Mammary epithelial cell (primary cell): ENCODE measurements at regions of chr6 and their contacts with region 1.

Region 1: GRCh38 chr6:10694302-10695085 is at the starts of genes C6orf52 and PAK1IP1:
- DNase-seq: peak; percentile 91
- H3K4me3 ChIP-seq: peak within 1 kb of the TSS; percentile 58 to 98 (median 96)
- H3K27ac ChIP-seq: peak within 1 kb of the TSS; percentile 98
- H3K4me1 ChIP-seq: peaks cover 19% of the 10 kb centered on the region
- H3K27me3 ChIP-seq: no peaks in the 10 kb centered on the region
- CTCF ChIP-seq: no peak
- total RNA-seq, gene C6orf52: 0.50 TPM in 1 of 2 donors, not detected in the other
- total RNA-seq, gene PAK1IP1: 14.8 to 24.7 TPM

Region 2: GRCh38 chr6:10060004-10060403 is 634.5 kb before region 1 on chr6:
- CTCF ChIA-PET with region 1: no interaction called
- dilution Hi-C with region 1: no loop called
- in situ Hi-C with region 1: no loop called
- intact Hi-C with region 1: no loop called
- DNase-seq: no peak
- H3K4me3 ChIP-seq: no peak overlapping the region
- H3K27ac ChIP-seq: no peak overlapping the region
- H3K4me1 ChIP-seq: no peaks in the 10 kb centered on the region
- H3K27me3 ChIP-seq: no peaks in the 10 kb centered on the region
- CTCF ChIP-seq: no peak

Region 3: DNA sequence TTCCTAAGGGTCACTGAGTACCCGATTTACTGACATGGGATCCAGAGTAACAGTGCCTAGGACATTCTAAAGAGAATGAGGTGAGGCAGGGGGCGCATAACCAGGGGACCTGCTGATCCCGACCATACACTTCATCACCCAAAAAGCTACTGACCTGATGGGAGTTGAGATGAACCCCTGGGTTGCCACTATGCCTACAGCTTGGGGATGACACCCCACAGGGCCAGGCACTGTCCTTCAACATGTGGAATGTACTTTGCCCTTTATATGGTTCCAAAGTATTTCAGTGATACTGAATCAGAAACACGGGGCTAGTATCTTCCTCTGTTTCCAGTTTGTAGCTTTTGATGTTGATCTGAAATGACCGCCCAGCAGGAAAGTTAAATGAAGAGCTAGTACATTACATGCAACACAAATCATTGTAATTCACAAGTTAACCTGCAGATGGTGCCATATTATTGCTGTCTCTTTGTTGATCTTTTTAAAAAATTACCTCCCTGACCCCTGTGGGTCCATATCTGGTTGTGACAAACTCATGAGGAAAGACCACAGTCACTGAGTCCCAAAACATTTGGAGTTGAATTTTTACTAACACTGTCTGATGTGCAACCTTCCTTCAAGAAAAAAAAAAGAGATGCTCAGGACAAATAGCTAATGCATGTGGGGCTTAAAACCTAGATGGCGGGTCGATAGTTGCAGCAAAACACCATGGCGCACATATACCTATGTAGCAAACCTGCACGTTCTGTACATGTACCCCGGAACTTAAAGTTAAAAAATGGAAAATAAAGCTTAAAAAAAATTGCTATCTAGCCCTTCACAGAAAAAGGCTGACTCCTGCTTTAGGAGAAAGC is 216.1 kb before region 1 on chr6:
- CTCF ChIA-PET with region 1: no interaction called
- dilution Hi-C with region 1: no loop called
- in situ Hi-C with region 1: no loop called
- intact Hi-C with region 1: loop called (anchors 1 kb)
- DNase-seq: peak; percentile 30
- H3K4me3 ChIP-seq: no peak overlapping the region
- H3K27ac ChIP-seq: no peak overlapping the region
- H3K4me1 ChIP-seq: peaks cover 14% of the 10 kb centered on the region
- H3K27me3 ChIP-seq: no peaks in the 10 kb centered on the region
- CTCF ChIP-seq: peak; percentile 53 to 54

Region 4: GRCh38 chr6:10633216-10633615 is 61.3 kb before region 1 on chr6:
- CTCF ChIA-PET with region 1: no interaction called
- dilution Hi-C with region 1: no loop called
- in situ Hi-C with region 1: no loop called
- intact Hi-C with region 1: loop called (anchors 2 kb)
- DNase-seq: peak; percentile 94
- H3K4me3 ChIP-seq: no peak overlapping the region
- H3K27ac ChIP-seq: peak overlapping the region; percentile 63
- H3K4me1 ChIP-seq: peaks cover 15% of the 10 kb centered on the region
- H3K27me3 ChIP-seq: no peaks in the 10 kb centered on the region
- CTCF ChIP-seq: no peak

Region 5: GRCh38 chr6:10733151-10733715 is 38.7 kb after region 1 on chr6:
- CTCF ChIA-PET with region 1: interaction called, 12 read pairs
- dilution Hi-C with region 1: no loop called
- in situ Hi-C with region 1: no loop called
- intact Hi-C with region 1: no loop called
- DNase-seq: no peak
- H3K4me3 ChIP-seq: no peak overlapping the region
- H3K27ac ChIP-seq: no peak overlapping the region
- H3K4me1 ChIP-seq: peaks cover 8% of the 10 kb centered on the region
- H3K27me3 ChIP-seq: no peaks in the 10 kb centered on the region
- CTCF ChIP-seq: no peak

Region 6: DNA sequence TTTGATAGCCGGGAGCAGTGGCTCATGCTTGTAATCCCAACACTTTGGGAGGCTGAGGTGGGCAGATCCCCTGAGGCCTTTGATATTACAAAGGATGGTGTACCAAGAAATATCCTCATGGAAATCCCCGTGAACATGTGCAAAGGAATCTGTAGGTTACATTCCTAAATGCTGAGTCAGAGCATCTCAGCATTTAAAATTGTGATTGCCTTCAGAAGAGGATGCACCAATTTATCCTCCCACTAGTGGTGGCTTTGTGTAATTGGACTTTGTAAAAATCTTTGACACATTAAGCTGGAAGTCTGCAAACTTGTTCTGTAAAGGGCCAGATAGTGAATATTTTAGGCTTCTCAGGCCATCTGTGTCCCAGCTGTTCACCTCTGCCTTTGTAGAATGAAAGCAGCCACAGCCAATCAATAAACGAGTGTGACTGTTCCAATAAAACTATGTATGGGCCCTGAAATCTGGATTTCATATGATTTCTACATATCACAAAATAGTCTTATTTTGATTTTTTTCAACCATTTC is 64.9 kb after region 1 on chr6:
- CTCF ChIA-PET with region 1: no interaction called
- dilution Hi-C with region 1: no loop called
- in situ Hi-C with region 1: no loop called
- intact Hi-C with region 1: loop called (anchors 1 kb)
- DNase-seq: peak; percentile 96
- H3K4me3 ChIP-seq: no peak overlapping the region
- H3K27ac ChIP-seq: peak overlapping the region; percentile 84
- H3K4me1 ChIP-seq: peaks cover 21% of the 10 kb centered on the region
- H3K27me3 ChIP-seq: no peaks in the 10 kb centered on the region
- CTCF ChIP-seq: peak; percentile 58 to 67

Region 7: GRCh38 chr6:10809098-10809497 is 114.6 kb after region 1 on chr6:
- CTCF ChIA-PET with region 1: no interaction called
- dilution Hi-C with region 1: no loop called
- in situ Hi-C with region 1: no loop called
- intact Hi-C with region 1: no loop called
- DNase-seq: no peak
- H3K4me3 ChIP-seq: no peak overlapping the region
- H3K27ac ChIP-seq: no peak overlapping the region
- H3K4me1 ChIP-seq: no peaks in the 10 kb centered on the region
- H3K27me3 ChIP-seq: no peaks in the 10 kb centered on the region
- CTCF ChIP-seq: no peak